PC-3 (cell line): ENCODE measurements at regions of chr4 and their contacts with region 1.

Region 1: GRCh38 chr4:31045724-31046318 is 325.7 kb downstream of the PCDH7 start:
- DNase-seq: peak; percentile 65
- ATAC-seq: peak; percentile 67
- H3K4me3 ChIP-seq: no peak overlapping the region
- H3K27ac ChIP-seq: no peak overlapping the region
- H3K4me1 ChIP-seq: peaks cover 8% of the 10 kb centered on the region; the same call in 1 of the 2 replicates
- H3K27me3 ChIP-seq: no peaks in the 10 kb centered on the region
- CTCF ChIP-seq: peak; percentile 72

Region 2: GRCh38 chr4:30950737-30951136 is 95.1 kb before region 1 on chr4:
- CTCF ChIA-PET with region 1: no interaction called
- POLR2A ChIA-PET with region 1: no interaction called
- intact Hi-C with region 1: loop called (anchors 10 kb)
- DNase-seq: peak; percentile 91
- ATAC-seq: peak; percentile 96
- H3K4me3 ChIP-seq: no peak overlapping the region
- H3K27ac ChIP-seq: peak overlapping the region; percentile 42; the same call in 1 of the 2 replicates
- H3K4me1 ChIP-seq: peaks cover 35% of the 10 kb centered on the region
- H3K27me3 ChIP-seq: no peaks in the 10 kb centered on the region
- CTCF ChIP-seq: no peak

Region 3: DNA sequence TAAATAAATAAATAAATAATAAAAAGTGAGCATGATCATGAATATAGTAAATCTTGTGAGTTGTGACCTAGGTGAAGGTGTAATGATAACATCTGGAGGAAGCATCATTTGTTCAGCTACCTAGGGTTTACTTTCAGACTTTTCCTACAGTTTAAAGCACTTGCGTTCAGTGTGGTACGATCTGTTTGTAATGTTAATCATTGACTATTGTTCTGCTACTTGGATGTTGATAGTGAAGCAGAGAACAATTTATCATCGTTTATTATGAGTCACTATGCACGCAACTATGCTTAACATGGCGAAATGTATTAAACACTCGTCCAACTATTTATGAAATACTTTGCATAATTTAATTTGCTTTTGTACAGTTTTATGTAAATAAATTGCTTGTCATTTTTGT is 100.5 kb after region 1 on chr4:
- CTCF ChIA-PET with region 1: no interaction called
- POLR2A ChIA-PET with region 1: no interaction called
- intact Hi-C with region 1: loop called (anchors 5 kb)
- DNase-seq: peak; percentile 42
- ATAC-seq: peak; percentile 64
- H3K4me3 ChIP-seq: no peak overlapping the region
- H3K27ac ChIP-seq: no peak overlapping the region
- H3K4me1 ChIP-seq: no peaks in the 10 kb centered on the region
- H3K27me3 ChIP-seq: no peaks in the 10 kb centered on the region
- CTCF ChIP-seq: no peak

Region 4: DNA sequence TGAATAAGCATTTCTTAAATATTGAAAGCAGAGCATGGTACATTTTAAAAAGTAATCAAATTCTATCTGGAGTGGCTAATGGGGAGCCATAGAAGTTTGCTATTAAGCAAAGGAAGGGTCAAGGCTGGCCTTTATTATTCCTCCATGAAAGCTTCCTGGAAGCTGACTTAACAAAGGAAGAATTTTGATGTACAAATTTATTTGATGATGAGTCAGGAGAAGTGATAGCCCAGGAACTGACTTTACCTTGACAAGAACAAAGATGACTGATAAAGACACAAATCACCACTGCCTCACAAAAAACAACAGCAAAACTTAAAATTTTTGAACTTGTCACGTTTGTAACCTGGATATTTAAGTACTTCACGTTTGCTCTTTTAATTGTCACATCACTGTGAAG is 546.5 kb after region 1 on chr4:
- CTCF ChIA-PET with region 1: no interaction called
- POLR2A ChIA-PET with region 1: no interaction called
- intact Hi-C with region 1: loop called (anchors 5 kb)
- DNase-seq: peak; percentile 57
- ATAC-seq: peak; percentile 78
- H3K4me3 ChIP-seq: no peak overlapping the region
- H3K27ac ChIP-seq: no peak overlapping the region
- H3K4me1 ChIP-seq: peaks cover 6% of the 10 kb centered on the region; the same call in 1 of the 2 replicates
- H3K27me3 ChIP-seq: no peaks in the 10 kb centered on the region
- CTCF ChIP-seq: no peak

Region 5: GRCh38 chr4:32042486-32043247 is 996.8 kb after region 1 on chr4:
- CTCF ChIA-PET with region 1: no interaction called
- POLR2A ChIA-PET with region 1: no interaction called
- intact Hi-C with region 1: loop called (anchors 5 kb)
- DNase-seq: no peak
- ATAC-seq: peak; percentile 83
- H3K4me3 ChIP-seq: no peak overlapping the region
- H3K27ac ChIP-seq: no peak overlapping the region
- H3K4me1 ChIP-seq: peaks cover 10% of the 10 kb centered on the region; the same call in 1 of the 2 replicates
- H3K27me3 ChIP-seq: no peaks in the 10 kb centered on the region
- CTCF ChIP-seq: peak; percentile 28; the same call in 1 of the 2 replicates